ENCODE measurements at regions of chr12 and their contacts with region 1.

Region 1: DNA sequence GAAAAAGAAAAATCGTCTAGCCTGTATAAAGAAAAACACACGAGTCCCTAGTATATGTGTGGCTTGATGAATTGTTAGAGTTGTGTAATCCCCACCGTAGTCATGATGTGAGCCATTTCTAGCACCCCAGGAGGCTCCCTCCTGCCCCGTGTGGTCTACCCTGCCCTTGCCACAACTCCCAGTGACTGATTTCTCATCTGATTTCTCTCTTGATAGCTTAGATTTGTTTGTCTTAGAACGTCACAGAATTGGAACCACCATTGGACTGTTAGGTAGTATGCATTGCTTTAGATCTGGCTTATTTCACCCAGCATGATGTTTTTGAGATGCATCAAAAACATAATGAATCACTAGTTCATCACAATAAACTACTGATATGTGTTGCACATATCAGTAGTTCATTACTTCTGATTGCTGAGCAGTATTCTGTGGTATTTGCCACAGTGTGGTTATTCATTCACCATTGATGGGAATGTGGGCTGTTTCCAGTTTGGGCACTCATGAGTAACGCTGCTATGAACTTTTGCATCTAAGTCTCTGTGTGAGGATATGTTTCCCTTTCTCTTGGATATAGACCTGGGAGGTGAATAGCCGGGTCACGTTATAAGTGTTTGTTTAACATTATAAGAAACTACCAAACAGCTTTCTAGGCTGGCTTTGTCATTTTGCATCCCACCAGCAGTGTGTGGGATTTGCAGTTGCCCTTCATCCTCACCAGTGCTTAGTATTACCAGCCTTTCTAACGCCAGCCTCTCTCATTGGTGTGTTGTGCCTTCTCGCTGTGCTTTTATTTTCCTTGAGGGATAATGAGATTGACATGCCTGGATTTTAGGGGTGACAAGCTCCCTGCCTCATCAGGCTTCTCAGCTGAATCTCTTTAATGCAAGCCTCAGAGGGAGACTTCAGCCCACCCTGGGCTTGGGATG is 31.9 kb upstream of the NCOR2 start:
- DNase-seq: no peak
- H3K4me3 ChIP-seq: no peak overlapping the region
- H3K27ac ChIP-seq: no peak overlapping the region
- H3K4me1 ChIP-seq: no peaks in the 10 kb centered on the region
- H3K27me3 ChIP-seq: no peaks in the 10 kb centered on the region
- CTCF ChIP-seq: no peak
- POLR2A ChIP-seq: no peak

Region 2: GRCh38 chr12:124576061-124576650 is 23.2 kb before region 1 on chr12:
- intact Hi-C with region 1: loop called (anchors 1 kb)
- DNase-seq: no peak
- H3K4me3 ChIP-seq: no peak overlapping the region
- H3K27ac ChIP-seq: no peak overlapping the region
- H3K4me1 ChIP-seq: no peaks in the 10 kb centered on the region
- H3K27me3 ChIP-seq: no peaks in the 10 kb centered on the region
- CTCF ChIP-seq: no peak
- POLR2A ChIP-seq: no peak